HEK293 (cell line): ENCODE measurements at regions of chr1 and their contacts with region 1.

Region 1: GRCh38 chr1:9196129-9197040 is 38.2 kb upstream of the H6PD start:
- H3K4me3 ChIP-seq: no peak overlapping the region
- H3K27ac ChIP-seq: no peak overlapping the region
- H3K4me1 ChIP-seq: no peaks in the 10 kb centered on the region
- CTCF ChIP-seq: peak; percentile 57

Region 2: GRCh38 chr1:9078015-9078750 is 118.2 kb before region 1 on chr1:
- CTCF ChIA-PET with region 1: no interaction called
- POLR2A ChIA-PET with region 1: no interaction called
- H3K4me3 ChIP-seq: no peak overlapping the region
- H3K27ac ChIP-seq: no peak overlapping the region
- H3K4me1 ChIP-seq: peaks cover 7% of the 10 kb centered on the region
- CTCF ChIP-seq: no peak

Region 3: GRCh38 chr1:9110669-9111356 is 85.6 kb before region 1 on chr1:
- CTCF ChIA-PET with region 1: interaction called, 42 read pairs
- POLR2A ChIA-PET with region 1: no interaction called
- H3K4me3 ChIP-seq: no peak overlapping the region
- H3K27ac ChIP-seq: no peak overlapping the region
- H3K4me1 ChIP-seq: no peaks in the 10 kb centered on the region; the same call in 1 of the 2 replicates
- CTCF ChIP-seq: peak; percentile 85

Region 4: GRCh38 chr1:9181176-9181906 is 15.0 kb before region 1 on chr1:
- CTCF ChIA-PET with region 1: interaction called, 16 read pairs
- POLR2A ChIA-PET with region 1: interaction called, 3 read pairs
- H3K4me3 ChIP-seq: peak overlapping the region; percentile 86
- H3K27ac ChIP-seq: peak overlapping the region; percentile 97
- H3K4me1 ChIP-seq: peaks cover 7% of the 10 kb centered on the region; the same call in 1 of the 2 replicates
- CTCF ChIP-seq: peak; percentile 96

Region 5: GRCh38 chr1:9671377-9672140 is 475.2 kb after region 1 on chr1:
- CTCF ChIA-PET with region 1: no interaction called
- POLR2A ChIA-PET with region 1: no interaction called
- H3K4me3 ChIP-seq: no peak overlapping the region
- H3K27ac ChIP-seq: no peak overlapping the region
- H3K4me1 ChIP-seq: no peaks in the 10 kb centered on the region
- CTCF ChIP-seq: no peak